PC-3 (cell line): ENCODE measurements at regions of chr16 and their contacts with region 1.

Region 1: GRCh38 chr16:53130159-53131049 is 75.6 kb downstream of the CHD9 start:
- DNase-seq: peak; percentile 83
- ATAC-seq: peak; percentile 76
- H3K4me3 ChIP-seq: peak overlapping the region; percentile 75
- H3K27ac ChIP-seq: peak overlapping the region; percentile 69
- H3K4me1 ChIP-seq: peaks cover 13% of the 10 kb centered on the region
- H3K27me3 ChIP-seq: no peaks in the 10 kb centered on the region
- CTCF ChIP-seq: peak; percentile 18; the same call in 1 of the 2 replicates

Region 2: GRCh38 chr16:53099318-53100130 is 30.9 kb before region 1 on chr16:
- CTCF ChIA-PET with region 1: no interaction called
- POLR2A ChIA-PET with region 1: interaction called, 4 read pairs
- intact Hi-C with region 1: loop called (anchors 1 kb)
- DNase-seq: peak; percentile 92
- ATAC-seq: peak; percentile 84
- H3K4me3 ChIP-seq: peak overlapping the region; percentile 43
- H3K27ac ChIP-seq: peak overlapping the region; percentile 98
- H3K4me1 ChIP-seq: peaks cover 17% of the 10 kb centered on the region
- H3K27me3 ChIP-seq: no peaks in the 10 kb centered on the region
- CTCF ChIP-seq: no peak

Region 3: GRCh38 chr16:53207810-53208752 is 77.7 kb after region 1 on chr16:
- CTCF ChIA-PET with region 1: interaction called, 3 read pairs
- POLR2A ChIA-PET with region 1: no interaction called
- intact Hi-C with region 1: loop called (anchors 2 kb)
- DNase-seq: peak; percentile 66
- ATAC-seq: peak; percentile 86
- H3K4me3 ChIP-seq: peak overlapping the region; percentile 75
- H3K27ac ChIP-seq: peak overlapping the region; percentile 83
- H3K4me1 ChIP-seq: peaks cover 4% of the 10 kb centered on the region
- H3K27me3 ChIP-seq: no peaks in the 10 kb centered on the region
- CTCF ChIP-seq: peak; percentile 64

Region 4: GRCh38 chr16:53282975-53283946 is 152.9 kb after region 1 on chr16:
- CTCF ChIA-PET with region 1: no interaction called
- POLR2A ChIA-PET with region 1: no interaction called
- intact Hi-C with region 1: loop called (anchors 10 kb)
- DNase-seq: peak; percentile 66
- ATAC-seq: peak; percentile 70
- H3K4me3 ChIP-seq: no peak overlapping the region
- H3K27ac ChIP-seq: no peak overlapping the region
- H3K4me1 ChIP-seq: no peaks in the 10 kb centered on the region
- H3K27me3 ChIP-seq: no peaks in the 10 kb centered on the region
- CTCF ChIP-seq: peak; percentile 74

Region 5: GRCh38 chr16:53503270-53503923 is 373.0 kb after region 1 on chr16:
- CTCF ChIA-PET with region 1: no interaction called
- POLR2A ChIA-PET with region 1: no interaction called
- intact Hi-C with region 1: loop called (anchors 1 kb)
- DNase-seq: peak; percentile 98
- ATAC-seq: peak; percentile 88
- H3K4me3 ChIP-seq: peak overlapping the region; percentile 75
- H3K27ac ChIP-seq: peak overlapping the region; percentile 30; the same call in 1 of the 2 replicates
- H3K4me1 ChIP-seq: peaks cover 22% of the 10 kb centered on the region
- H3K27me3 ChIP-seq: no peaks in the 10 kb centered on the region
- CTCF ChIP-seq: no peak